Psoas muscle (tissue), 8 donors: ENCODE measurements at regions of chr1 and their contacts with region 1.

Region 1: GRCh38 chr1:10429868-10430215 is 391 bp upstream of the CENPS start:
- DNase-seq: no peak
- ATAC-seq: peak in 1 of 4 donors; percentile 1
- H3K4me3 ChIP-seq: peak overlapping the region; percentile 93
- H3K27ac ChIP-seq: no peak overlapping the region
- H3K4me1 ChIP-seq: peaks cover 14% of the 10 kb centered on the region
- H3K27me3 ChIP-seq: no peaks in the 10 kb centered on the region
- CTCF ChIP-seq: no peak

Region 2: GRCh38 chr1:9629445-9630201 is 800.2 kb before region 1 on chr1:
- intact Hi-C with region 1: loop called in 1 of 2 experiments (anchors 5 kb)
- DNase-seq: peak; percentile 46 to 73
- ATAC-seq: peak in 3 of 4 donors; percentile 16 to 18 (median 16)
- H3K4me3 ChIP-seq: no peak overlapping the region
- H3K27ac ChIP-seq: no peak overlapping the region
- H3K4me1 ChIP-seq: no peaks in the 10 kb centered on the region
- H3K27me3 ChIP-seq: peaks cover 0 to 2% (median 0%) of the 10 kb centered on the region in 3 donors
- CTCF ChIP-seq: no peak

Region 3: GRCh38 chr1:9874959-9875635 is 554.7 kb before region 1 on chr1:
- intact Hi-C with region 1: loop called in 1 of 2 experiments (anchors 2 kb)
- DNase-seq: peak; percentile 71 to 81
- ATAC-seq: peak; percentile 77 to 90 (median 81)
- H3K4me3 ChIP-seq: peak overlapping the region; percentile 36
- H3K27ac ChIP-seq: no peak overlapping the region
- H3K4me1 ChIP-seq: peaks cover 28% of the 10 kb centered on the region
- H3K27me3 ChIP-seq: no peaks in the 10 kb centered on the region
- CTCF ChIP-seq: peak; percentile 94

Region 4: GRCh38 chr1:10374442-10374860 is 55.4 kb before region 1 on chr1:
- intact Hi-C with region 1: loop called in 1 of 2 experiments (anchors 2 kb)
- DNase-seq: no peak
- ATAC-seq: no peak
- H3K4me3 ChIP-seq: no peak overlapping the region
- H3K27ac ChIP-seq: no peak overlapping the region
- H3K4me1 ChIP-seq: no peaks in the 10 kb centered on the region
- H3K27me3 ChIP-seq: no peaks in the 10 kb centered on the region
- CTCF ChIP-seq: no peak

Region 5: DNA sequence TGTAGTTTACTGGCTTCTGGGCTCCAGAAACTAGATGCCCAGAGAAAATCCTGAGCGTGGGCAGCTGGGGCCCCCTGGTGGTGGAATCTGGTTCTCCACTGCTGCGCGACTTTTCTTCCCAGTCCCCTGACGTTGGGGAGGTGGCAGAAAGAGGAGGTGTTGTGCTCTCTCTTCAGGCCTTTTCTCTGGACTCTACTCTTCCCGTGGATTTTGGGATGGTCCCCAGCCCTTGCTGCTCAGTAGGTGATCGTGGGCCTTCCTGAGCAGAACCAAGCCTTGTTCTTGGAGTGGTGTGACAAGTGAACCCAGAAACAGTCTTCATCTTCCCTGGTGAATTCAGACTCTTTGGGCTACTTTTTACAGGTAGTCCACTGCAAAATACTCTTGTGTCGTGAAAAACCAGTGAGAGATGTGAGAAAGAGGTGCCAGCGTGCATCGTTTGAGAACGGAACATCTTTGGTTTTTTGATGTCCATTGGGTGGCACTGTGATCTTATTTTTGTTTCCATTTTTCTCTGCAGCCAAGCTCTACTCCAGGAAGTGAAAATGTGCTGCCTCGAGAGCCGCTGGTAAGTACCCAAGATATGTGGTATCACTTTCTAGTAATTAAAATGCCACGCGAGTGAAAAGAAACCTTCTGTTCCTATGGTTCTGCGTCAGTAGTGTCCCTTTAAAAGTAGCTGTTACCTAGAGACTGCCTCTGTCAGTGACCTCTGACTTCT is 65.1 kb after region 1 on chr1:
- intact Hi-C with region 1: loop called in 1 of 2 experiments (anchors 1 kb)
- DNase-seq: peak; percentile 74 to 78
- ATAC-seq: peak; percentile 76 to 94 (median 83)
- H3K4me3 ChIP-seq: no peak overlapping the region
- H3K27ac ChIP-seq: peak overlapping the region; percentile 68
- H3K4me1 ChIP-seq: peaks cover 18% of the 10 kb centered on the region
- H3K27me3 ChIP-seq: no peaks in the 10 kb centered on the region
- CTCF ChIP-seq: peak; percentile 85

Region 6: GRCh38 chr1:10824821-10825423 is 395.1 kb after region 1 on chr1:
- intact Hi-C with region 1: no loop called
- DNase-seq: no peak
- ATAC-seq: peak in 1 of 4 donors; percentile 6
- H3K4me3 ChIP-seq: no peak overlapping the region
- H3K27ac ChIP-seq: no peak overlapping the region
- H3K4me1 ChIP-seq: peaks cover 6% of the 10 kb centered on the region
- H3K27me3 ChIP-seq: no peaks in the 10 kb centered on the region
- CTCF ChIP-seq: no peak